Common myeloid progenitor, CD34-positive (primary cell): ENCODE measurements at regions of chr17 and their contacts with region 1.

Region 1: GRCh38 chr17:38947189-38947588 is 20.0 kb downstream of the FBXO47 start:
- DNase-seq: peak in 2 of 3 donors; percentile 35 to 43
- H3K4me3 ChIP-seq: no peak overlapping the region
- H3K27ac ChIP-seq: no peak overlapping the region
- H3K4me1 ChIP-seq: no peaks in the 10 kb centered on the region
- H3K27me3 ChIP-seq: no peaks in the 10 kb centered on the region

Region 2: DNA sequence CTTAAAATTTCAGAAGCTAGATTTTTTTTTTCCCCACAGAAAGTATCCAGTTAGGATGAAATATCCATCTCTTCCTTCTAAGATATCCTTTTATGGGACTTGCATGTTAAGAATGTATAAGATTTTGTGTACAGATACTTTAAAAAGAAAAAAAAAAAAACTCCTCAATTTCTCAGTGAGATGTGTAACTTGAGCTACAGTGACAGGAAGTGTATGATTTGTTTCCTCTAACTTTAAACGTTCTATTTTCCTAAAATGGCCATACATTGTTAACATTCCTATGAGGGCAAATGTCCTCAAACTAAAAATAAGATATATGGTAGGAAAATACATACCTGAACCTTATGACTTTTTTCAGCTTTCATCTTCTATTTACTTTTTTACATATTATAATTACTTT is 11.1 kb after region 1 on chr17:
- CTCF ChIA-PET with region 1: no interaction called
- POLR2A ChIA-PET with region 1: no interaction called
- DNase-seq: no peak
- H3K4me3 ChIP-seq: no peak overlapping the region
- H3K27ac ChIP-seq: no peak overlapping the region
- H3K4me1 ChIP-seq: no peaks in the 10 kb centered on the region
- H3K27me3 ChIP-seq: no peaks in the 10 kb centered on the region

Region 3: GRCh38 chr17:39123627-39124026 is 176.4 kb after region 1 on chr17:
- CTCF ChIA-PET with region 1: no interaction called
- POLR2A ChIA-PET with region 1: interaction called, 12 read pairs
- DNase-seq: no peak
- H3K4me3 ChIP-seq: no peak overlapping the region
- H3K27ac ChIP-seq: no peak overlapping the region
- H3K4me1 ChIP-seq: no peaks in the 10 kb centered on the region
- H3K27me3 ChIP-seq: peaks cover 0 to 11% (median 0%) of the 10 kb centered on the region in 5 experiments